ENCODE measurements at regions of chr9 and their contacts with region 1.

Region 1: DNA sequence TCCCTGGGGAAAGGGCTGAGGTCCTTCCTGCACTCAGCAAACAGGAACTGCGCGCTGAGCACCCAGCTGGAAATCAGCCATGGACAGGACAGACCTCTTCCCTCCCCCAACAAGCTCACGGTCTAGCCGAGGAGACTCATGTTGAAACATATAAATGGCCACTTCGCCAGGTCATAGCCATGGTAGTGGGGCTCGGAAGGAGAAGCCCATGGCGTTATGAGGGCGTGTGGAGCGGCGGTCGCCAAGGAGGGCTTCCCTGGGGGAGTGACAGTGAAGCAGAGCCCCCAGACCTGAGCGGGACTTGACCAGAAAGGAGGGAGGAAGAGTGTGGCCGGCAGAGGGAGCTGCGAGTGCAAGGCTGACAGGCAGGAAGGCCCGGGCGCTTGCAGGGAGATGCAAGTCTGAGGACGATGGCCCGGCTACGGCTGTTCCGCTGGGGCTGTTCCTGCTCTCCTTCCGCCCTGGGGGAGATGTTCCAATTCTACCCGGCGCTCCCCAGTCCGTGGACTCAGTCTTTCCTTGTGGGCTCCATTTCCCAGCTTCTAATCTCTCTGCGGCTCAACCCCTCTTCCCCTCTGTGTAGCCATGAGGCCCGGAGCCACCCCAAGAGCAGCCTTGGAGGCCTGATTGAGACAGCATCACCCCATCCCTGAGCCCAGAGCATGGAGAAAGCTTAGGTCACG is 43.9 kb upstream of the PRRC2B start:
- DNase-seq: peak; percentile 85
- H3K4me3 ChIP-seq: peak overlapping the region in 2 of 3 experiments; percentile 9 to 17
- H3K27ac ChIP-seq: no peak overlapping the region
- H3K4me1 ChIP-seq: peaks cover 2% of the 10 kb centered on the region
- H3K27me3 ChIP-seq: no peaks in the 10 kb centered on the region
- CTCF ChIP-seq: peak; percentile 76 to 92
- POLR2A ChIP-seq: no peak

Region 2: GRCh38 chr9:131289301-131290038 is 60.6 kb before region 1 on chr9 and contains the start of gene PLPP7:
- CTCF ChIA-PET with region 1: no interaction called
- POLR2A ChIA-PET with region 1: no interaction called
- dilution Hi-C with region 1: no loop called
- intact Hi-C with region 1: no loop called
- DNase-seq: peak; percentile 15
- H3K4me3 ChIP-seq: peak within 1 kb of the TSS in 1 of 3 experiments; percentile 22
- H3K27ac ChIP-seq: no peak within 1 kb of the TSS
- H3K4me1 ChIP-seq: no peaks in the 10 kb centered on the region
- H3K27me3 ChIP-seq: no peaks in the 10 kb centered on the region
- CTCF ChIP-seq: no peak
- POLR2A ChIP-seq: no peak
- total RNA-seq, gene PLPP7: 0.83 and 2.1 TPM in 2 replicates

Region 3: DNA sequence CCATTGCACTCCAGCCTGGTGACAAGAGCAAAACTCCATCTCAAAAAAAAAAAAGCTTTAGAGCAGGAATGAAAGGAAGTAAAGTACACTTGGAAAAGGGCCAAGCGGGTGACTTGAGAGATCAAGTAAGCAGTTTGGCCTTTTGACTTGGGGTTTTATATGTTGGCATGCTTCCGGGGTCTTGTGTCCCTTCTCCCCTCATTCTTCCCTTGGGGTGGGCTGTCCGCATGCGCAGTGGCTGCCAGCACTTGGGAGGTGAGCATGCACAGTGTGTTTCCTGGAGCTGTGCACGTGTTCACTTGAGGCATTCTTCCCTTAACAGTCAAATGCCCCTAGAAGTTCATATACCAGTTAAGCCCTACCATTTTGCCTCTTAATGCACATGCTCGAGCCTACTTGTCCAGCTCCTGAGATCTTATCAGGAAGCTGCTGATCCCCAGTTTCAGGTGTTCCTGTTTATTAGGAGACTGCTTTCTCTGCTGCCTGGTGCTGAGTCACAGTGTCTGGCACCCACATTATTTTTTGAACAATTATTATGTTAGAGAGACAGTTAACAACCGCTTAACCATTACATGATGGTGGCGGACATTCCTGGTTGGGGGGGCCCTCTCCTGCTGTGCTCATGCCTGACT is 11.3 kb after region 1 on chr9:
- CTCF ChIA-PET with region 1: interaction called, 27 read pairs
- POLR2A ChIA-PET with region 1: no interaction called
- dilution Hi-C with region 1: no loop called
- intact Hi-C with region 1: no loop called
- DNase-seq: peak; percentile 45
- H3K4me3 ChIP-seq: no peak overlapping the region
- H3K27ac ChIP-seq: no peak overlapping the region
- H3K4me1 ChIP-seq: no peaks in the 10 kb centered on the region
- H3K27me3 ChIP-seq: peaks cover 0 to 2% of the 10 kb centered on the region in 2 experiments
- CTCF ChIP-seq: no peak
- POLR2A ChIP-seq: no peak

Region 4: DNA sequence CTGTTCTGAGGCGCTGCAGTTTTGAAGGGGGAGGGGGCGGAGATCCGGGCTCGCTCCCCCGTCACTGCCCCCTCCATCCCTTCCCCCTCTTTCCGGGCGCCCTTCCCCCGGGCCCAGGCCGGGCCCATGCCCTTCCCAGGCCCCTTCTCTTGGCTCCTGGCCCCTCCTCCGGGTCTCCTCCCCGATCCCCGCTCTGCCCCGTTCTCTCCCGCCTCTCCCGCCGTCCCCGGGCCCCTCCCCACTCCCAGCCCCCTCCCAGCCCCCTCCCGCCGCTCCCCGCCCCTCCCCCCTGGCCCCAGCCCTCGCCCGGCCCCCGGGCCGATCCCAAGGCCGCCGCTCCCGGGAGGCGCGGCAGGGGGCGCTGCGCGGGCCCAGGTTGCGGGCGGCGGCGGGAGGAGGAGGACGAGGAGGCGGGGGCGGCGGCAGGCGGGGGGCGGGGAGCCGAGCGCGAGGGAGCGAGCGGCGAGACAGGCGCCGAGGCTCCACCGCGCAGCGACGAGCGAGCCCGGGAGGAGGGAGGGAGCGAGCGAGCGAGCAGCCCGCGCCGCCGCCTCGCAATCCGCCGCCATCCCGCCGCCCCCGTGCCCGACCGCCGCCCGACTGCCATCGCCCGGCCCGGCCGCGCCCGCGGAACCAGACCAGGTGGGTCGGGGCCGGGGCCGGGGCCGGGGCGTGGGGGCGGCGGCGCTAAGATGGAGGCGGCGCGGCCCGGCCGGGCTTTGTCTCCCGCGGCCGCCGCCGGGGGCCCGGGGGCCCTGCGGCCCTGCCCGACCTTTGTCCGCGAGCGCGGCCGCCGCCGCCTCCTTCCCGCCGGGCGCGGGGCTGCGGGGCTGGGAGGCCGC is 43.8 kb after region 1 on chr9 and contains the start of gene PRRC2B:
- CTCF ChIA-PET with region 1: interaction called, 5 read pairs
- POLR2A ChIA-PET with region 1: no interaction called
- dilution Hi-C with region 1: no loop called
- intact Hi-C with region 1: loop called (anchors 2 kb)
- DNase-seq: peak; percentile 71
- H3K4me3 ChIP-seq: peak within 1 kb of the TSS; percentile 66 to 90 (median 86)
- H3K27ac ChIP-seq: peak within 1 kb of the TSS; percentile 57
- H3K4me1 ChIP-seq: peaks cover 40% of the 10 kb centered on the region
- H3K27me3 ChIP-seq: no peaks in the 10 kb centered on the region
- CTCF ChIP-seq: peak in 1 of 2 donors; percentile 33
- POLR2A ChIP-seq: peak; percentile 65
- total RNA-seq, gene PRRC2B: 248 and 256 TPM in 2 replicates

Region 5: DNA sequence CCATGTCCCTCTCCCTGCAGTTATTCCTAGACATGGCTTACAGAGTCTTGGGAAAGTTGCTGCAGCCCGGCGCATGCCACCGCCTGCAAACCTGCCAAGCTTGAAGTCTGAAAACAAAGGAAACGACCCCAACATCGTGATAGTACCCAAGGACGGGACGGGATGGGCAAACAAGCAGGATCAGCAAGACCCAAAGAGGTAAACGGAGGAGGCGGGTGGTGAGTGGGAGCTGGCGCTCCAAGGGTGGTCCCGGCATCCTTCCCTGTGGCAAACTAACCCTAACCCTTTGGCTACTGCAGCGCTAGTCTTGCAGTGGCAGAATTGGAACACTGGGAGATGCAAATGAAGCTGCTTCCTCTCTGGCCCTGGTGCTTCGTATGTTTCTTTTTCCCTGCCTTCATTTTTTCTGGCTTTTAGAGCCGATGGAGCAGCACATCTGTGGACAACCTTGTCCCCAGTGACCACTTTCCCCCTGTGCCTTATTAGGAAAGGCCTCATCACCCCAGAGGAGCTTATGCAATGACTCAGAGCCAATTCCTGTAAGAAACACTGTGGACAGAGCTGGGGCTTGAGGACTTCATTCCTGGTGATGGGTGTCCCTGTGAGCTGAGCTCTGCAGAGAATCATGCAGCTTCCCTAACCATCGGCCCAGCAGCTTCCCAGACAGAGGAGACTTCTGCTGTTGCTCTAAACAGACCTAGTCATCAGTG is 82.7 kb after region 1 on chr9:
- CTCF ChIA-PET with region 1: interaction called, 19 read pairs
- POLR2A ChIA-PET with region 1: no interaction called
- dilution Hi-C with region 1: no loop called
- intact Hi-C with region 1: no loop called
- DNase-seq: peak; percentile 39
- H3K4me3 ChIP-seq: no peak overlapping the region
- H3K27ac ChIP-seq: peak overlapping the region; percentile 27
- H3K4me1 ChIP-seq: peaks cover 32% of the 10 kb centered on the region
- H3K27me3 ChIP-seq: no peaks in the 10 kb centered on the region
- CTCF ChIP-seq: no peak
- POLR2A ChIP-seq: no peak

Region 6: DNA sequence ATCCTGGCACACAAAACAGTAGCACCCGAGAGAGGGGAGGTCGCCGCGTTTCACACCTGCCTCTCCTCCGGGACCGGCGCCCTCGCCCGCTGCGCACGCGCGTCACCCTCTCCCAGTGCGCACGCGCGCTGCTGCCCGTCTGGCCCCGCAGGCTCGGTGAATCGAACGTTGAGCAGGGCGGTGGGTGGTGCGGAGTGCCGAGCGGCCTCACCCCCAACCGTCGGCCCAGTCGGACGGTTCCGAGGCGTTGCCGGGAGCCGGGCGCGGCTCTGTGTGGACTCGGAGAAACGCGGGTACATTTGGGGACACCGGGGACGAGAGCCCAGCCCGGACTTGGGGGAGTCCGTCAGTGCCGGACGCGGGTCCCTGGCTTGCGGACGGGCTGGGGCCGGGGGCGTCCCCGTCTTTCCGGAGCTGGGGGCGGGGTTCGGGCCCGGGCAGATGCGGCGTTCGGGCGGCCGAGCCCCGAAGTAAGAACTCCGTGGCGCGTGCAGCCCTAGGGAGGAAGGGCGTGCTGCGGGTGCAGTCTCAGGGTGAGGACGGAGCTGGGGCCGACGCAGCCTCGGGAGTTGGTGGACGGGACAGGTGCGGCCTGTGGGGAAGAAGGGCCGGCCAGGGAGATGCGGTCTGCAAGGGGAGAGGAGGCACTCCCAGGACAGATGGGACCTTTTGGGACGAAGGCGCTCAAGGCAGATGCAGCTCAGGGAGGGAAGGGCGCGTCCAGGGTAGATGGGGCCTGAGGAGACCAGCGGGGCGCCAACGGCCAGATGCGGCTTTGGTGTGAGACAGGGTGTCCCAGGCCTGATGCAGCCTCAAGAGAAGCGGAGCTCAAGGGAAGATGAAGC is 153.0 kb after region 1 on chr9 and contains the start of gene POMT1:
- CTCF ChIA-PET with region 1: interaction called, 3 read pairs
- POLR2A ChIA-PET with region 1: no interaction called
- dilution Hi-C with region 1: no loop called
- intact Hi-C with region 1: loop called (anchors 1 kb)
- DNase-seq: peak; percentile 86
- H3K4me3 ChIP-seq: peak within 1 kb of the TSS; percentile 61 to 72 (median 62)
- H3K27ac ChIP-seq: no peak within 1 kb of the TSS
- H3K4me1 ChIP-seq: peaks cover 10% of the 10 kb centered on the region
- H3K27me3 ChIP-seq: no peaks in the 10 kb centered on the region
- CTCF ChIP-seq: no peak
- POLR2A ChIP-seq: peak; percentile 68
- total RNA-seq, gene POMT1: 39.1 and 44.7 TPM in 2 replicates

Region 7: DNA sequence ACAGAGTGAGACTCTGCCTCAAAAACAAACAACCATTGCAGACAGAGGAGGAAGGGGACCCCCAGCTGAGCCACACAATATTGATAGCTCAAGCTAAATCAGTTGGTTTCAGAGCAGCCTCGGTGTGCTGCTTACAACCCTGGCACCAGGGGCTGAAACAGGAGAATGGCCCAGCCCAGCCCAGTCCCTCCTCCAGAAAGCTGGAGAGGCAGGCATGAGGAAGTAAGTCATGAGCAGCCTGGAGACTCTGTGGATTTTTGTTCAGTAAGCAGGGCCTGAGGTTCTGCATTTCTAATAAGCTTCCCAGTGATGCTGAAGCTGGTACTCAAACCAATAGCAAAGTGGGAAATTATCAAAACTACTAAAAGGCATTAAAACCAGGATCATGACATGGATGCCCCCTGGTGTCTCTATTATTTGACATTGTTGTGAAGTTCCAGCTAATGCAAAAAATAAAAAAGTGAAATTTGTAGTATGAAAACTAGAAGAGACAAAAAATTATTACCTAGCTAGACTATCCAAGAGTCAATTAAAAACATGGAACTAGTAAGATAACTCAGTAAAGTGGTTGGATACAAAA is 209.5 kb after region 1 on chr9:
- CTCF ChIA-PET with region 1: interaction called, 31 read pairs
- POLR2A ChIA-PET with region 1: no interaction called
- dilution Hi-C with region 1: no loop called
- intact Hi-C with region 1: no loop called
- DNase-seq: no peak
- H3K4me3 ChIP-seq: no peak overlapping the region
- H3K27ac ChIP-seq: no peak overlapping the region
- H3K4me1 ChIP-seq: no peaks in the 10 kb centered on the region
- H3K27me3 ChIP-seq: peaks cover 6 to 15% of the 10 kb centered on the region in 2 experiments
- CTCF ChIP-seq: no peak
- POLR2A ChIP-seq: no peak

Region 8: GRCh38 chr9:131762356-131762932 is 412.4 kb after region 1 on chr9:
- CTCF ChIA-PET with region 1: no interaction called
- POLR2A ChIA-PET with region 1: no interaction called
- dilution Hi-C with region 1: no loop called
- intact Hi-C with region 1: no loop called
- DNase-seq: peak; percentile 47
- H3K4me3 ChIP-seq: no peak overlapping the region
- H3K27ac ChIP-seq: no peak overlapping the region
- H3K4me1 ChIP-seq: no peaks in the 10 kb centered on the region
- H3K27me3 ChIP-seq: peaks cover 13 to 17% of the 10 kb centered on the region in 2 experiments
- CTCF ChIP-seq: peak; percentile 77 to 91
- POLR2A ChIP-seq: no peak